Activated CD4-positive, alpha-beta T cell treated with anti-CD3 and anti-CD28 coated beads, Interleukin-2, amount 10 ng/mL, durations not matched to agents 7 days and 5 days (primary cell): ENCODE measurements at regions of chr1 and their contacts with region 1.

Region 1: DNA sequence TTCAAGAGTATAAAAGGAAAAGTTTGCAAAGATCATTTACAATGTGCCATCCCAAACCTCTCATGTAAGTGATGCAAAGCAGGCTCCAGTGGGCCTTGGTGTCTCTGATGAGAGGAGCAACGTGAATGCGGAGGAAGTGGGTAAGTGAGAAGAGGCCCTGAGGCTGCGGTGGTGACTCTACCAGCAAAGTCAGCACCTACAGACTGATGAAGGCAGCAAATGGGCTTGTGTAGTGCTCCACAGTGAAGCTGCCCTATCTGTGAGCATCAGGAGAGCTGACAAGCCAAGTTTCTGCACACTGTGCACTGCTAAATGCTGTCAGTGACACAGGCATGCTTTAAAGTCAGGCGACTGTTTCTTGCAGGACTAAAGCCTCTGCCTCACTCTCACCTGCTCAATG is 15.6 kb upstream of the RAP1A start:
- DNase-seq: peak; percentile 90
- H3K4me3 Mint-ChIP-seq: peak overlapping the region; percentile 40
- H3K27ac Mint-ChIP-seq: peak overlapping the region; percentile 95
- H3K4me1 Mint-ChIP-seq: peaks cover 73% of the 10 kb centered on the region
- H3K27me3 Mint-ChIP-seq: no peaks in the 10 kb centered on the region

Region 2: DNA sequence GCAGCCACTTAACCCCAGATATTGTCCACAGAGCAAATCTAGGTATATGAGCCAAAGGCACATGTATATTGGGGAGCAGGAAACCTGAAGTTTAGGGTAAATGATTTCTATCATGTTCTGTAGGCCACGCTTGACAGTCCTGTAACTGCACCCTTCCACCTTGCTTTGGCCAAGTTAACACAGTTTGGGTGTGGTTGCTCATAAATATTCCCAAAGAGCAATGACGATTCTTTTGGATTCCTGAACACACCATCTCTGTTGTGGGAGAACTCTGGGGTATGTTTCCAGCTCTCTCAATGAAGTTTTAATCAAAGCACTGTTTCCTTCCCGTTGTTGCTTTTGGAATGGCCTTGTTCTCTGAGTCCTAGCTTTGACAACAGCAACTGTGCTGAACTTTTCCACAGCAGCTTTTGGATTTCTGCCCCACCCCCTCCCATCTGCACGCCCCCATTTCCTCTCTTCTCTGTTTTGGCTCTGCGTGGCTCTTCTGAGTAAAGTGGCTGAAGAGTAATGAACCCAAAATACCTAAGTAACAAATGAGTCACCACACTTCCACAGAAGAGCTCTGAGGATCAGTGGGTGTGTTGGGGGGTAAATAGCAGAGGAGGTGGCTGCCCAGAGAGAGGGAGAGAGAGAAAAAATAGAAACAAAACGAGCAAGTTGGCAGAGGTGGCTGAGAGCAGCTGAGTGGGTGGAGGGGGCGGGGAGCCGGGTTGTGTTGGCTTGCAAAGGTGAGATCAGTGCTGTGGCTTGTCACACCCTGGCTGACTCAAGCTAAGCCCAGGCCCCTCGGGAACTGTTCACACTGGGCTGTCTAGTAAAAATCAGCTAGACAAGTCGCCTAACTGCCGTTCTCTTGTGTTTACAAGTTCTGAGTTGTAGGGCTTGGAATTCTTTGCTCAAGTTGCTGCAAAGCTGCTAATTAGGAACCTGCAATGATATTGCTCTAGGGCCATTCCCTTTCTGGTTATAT is 11.3 kb before region 1 on chr1:
- CTCF ChIA-PET with region 1: interaction called, 35 read pairs
- POLR2A ChIA-PET with region 1: interaction called, 6 read pairs
- DNase-seq: peak; percentile 90
- H3K4me3 Mint-ChIP-seq: peak overlapping the region; percentile 45
- H3K27ac Mint-ChIP-seq: peak overlapping the region; percentile 88
- H3K4me1 Mint-ChIP-seq: peaks cover 60% of the 10 kb centered on the region
- H3K27me3 Mint-ChIP-seq: no peaks in the 10 kb centered on the region

Region 3: DNA sequence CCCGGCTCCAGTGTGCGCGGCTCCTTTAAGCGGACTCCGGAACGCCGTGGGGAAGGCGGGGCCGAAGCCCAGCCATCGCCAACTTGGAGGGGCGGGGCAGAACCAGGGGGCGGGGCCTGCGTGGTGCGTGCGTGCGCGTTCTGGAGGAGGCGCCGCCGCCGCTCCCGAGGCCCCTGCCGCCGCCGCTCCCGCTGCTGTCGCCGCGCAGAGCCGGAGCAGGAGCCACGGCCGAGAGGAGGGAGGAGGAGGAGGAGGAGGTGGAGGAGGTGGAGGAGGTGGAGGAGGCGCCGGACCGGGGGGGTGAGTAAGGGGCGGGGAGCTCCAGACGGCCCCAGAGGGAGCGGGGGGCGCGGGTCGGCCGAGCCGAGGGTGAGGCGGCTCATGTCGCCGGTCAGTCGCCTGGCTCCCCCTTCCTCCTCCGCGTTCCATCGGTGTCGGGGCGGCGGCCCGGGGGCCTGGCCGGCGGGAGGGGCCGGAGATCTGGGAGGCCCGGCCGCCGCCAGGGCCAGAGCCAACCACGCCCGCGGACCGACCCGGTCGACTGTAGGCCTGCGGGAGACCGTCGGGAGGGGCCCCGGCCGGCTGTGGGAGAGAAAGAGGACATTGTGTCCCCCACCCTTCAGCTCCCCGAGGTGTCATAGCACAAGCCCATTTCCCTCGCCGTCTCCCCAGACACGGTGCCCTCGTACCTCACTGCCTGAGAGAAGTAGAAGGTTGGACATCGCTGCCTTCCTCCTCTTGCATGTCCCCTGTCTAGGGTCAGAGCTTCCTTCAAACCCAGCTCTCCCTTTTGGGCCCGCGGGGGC is 15.9 kb after region 1 on chr1 and contains the start of gene RAP1A:
- CTCF ChIA-PET with region 1: interaction called, 17 read pairs
- POLR2A ChIA-PET with region 1: no interaction called
- DNase-seq: peak; percentile 94
- H3K4me3 Mint-ChIP-seq: peak within 1 kb of the TSS; percentile 93
- H3K27ac Mint-ChIP-seq: peak within 1 kb of the TSS; percentile 94
- H3K4me1 Mint-ChIP-seq: peaks cover 73% of the 10 kb centered on the region
- H3K27me3 Mint-ChIP-seq: no peaks in the 10 kb centered on the region
- total RNA-seq, gene RAP1A: 128 to 130 TPM

Region 4: GRCh38 chr1:111666841-111667270 is 62.9 kb after region 1 on chr1:
- CTCF ChIA-PET with region 1: no interaction called
- POLR2A ChIA-PET with region 1: no interaction called
- DNase-seq: no peak
- H3K4me3 Mint-ChIP-seq: no peak overlapping the region
- H3K27ac Mint-ChIP-seq: peak overlapping the region; percentile 0
- H3K4me1 Mint-ChIP-seq: peaks cover 69% of the 10 kb centered on the region
- H3K27me3 Mint-ChIP-seq: no peaks in the 10 kb centered on the region